ENCODE measurements at regions of chr5 and their contacts with region 1.

Region 1: GRCh38 chr5:10317825-10318682 is 10.4 kb upstream of the CMBL start:
- DNase-seq: no peak
- H3K4me3 ChIP-seq: no peak overlapping the region
- H3K27ac ChIP-seq: no peak overlapping the region
- H3K4me1 ChIP-seq: no peaks in the 10 kb centered on the region; a peak in 2 of 7 replicates
- H3K27me3 ChIP-seq: no peaks in the 10 kb centered on the region
- CTCF ChIP-seq: no peak
- EP300 ChIP-seq: no peak
- POLR2A ChIP-seq: no peak
- RAD21 ChIP-seq: no peak

Region 2: GRCh38 chr5:10077791-10078545 is 240.1 kb before region 1 on chr5:
- CTCF ChIA-PET with region 1: no interaction called
- POLR2A ChIA-PET with region 1: no interaction called
- DNase-seq: no peak
- H3K4me3 ChIP-seq: no peak overlapping the region
- H3K27ac ChIP-seq: no peak overlapping the region
- H3K4me1 ChIP-seq: no peaks in the 10 kb centered on the region
- H3K27me3 ChIP-seq: no peaks in the 10 kb centered on the region
- CTCF ChIP-seq: no peak
- EP300 ChIP-seq: no peak
- POLR2A ChIP-seq: no peak
- RAD21 ChIP-seq: no peak

Region 3: DNA sequence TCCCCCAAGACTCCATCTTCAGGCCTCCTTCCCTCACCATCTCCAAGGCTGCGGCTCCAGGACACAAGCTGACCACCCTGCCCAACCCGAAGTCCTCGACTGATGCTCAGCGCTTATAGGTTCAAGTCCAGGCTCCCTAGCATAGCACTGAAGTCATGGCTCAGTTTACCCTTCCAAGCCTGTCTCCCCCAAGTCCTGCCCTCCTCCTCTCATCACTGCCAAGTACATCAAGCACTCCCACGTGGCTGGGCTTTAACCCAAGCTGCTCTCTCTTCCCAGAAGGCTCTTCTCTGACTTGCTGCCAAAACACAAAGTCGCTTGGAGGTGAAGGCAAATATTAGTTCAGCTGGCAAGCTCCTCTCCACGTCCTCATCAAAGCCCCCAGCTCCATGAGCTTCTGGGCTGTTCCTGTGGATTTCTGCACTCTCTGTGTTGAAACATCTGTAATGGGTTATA is 13.3 kb after region 1 on chr5:
- CTCF ChIA-PET with region 1: interaction called, 19 read pairs
- POLR2A ChIA-PET with region 1: interaction called, 4 read pairs
- DNase-seq: no peak
- H3K4me3 ChIP-seq: no peak overlapping the region
- H3K27ac ChIP-seq: no peak overlapping the region
- H3K4me1 ChIP-seq: peaks cover 0 to 1% (median 0%) of the 10 kb centered on the region in 4 experiments; a peak in 2 of 7 replicates
- H3K27me3 ChIP-seq: peaks cover 16 to 46% (median 41%) of the 10 kb centered on the region in 4 experiments
- CTCF ChIP-seq: no peak
- EP300 ChIP-seq: no peak
- POLR2A ChIP-seq: no peak
- RAD21 ChIP-seq: no peak